Esophagus muscularis mucosa (tissue), 4 donors: ENCODE measurements at regions of chr3 and their contacts with region 1.

Region 1: GRCh38 chr3:63911873-63912767 is at the start of gene SCAANT1:
- DNase-seq: peak; percentile 96
- H3K4me3 ChIP-seq: peak within 1 kb of the TSS; percentile 85 to 98 (median 95)
- H3K27ac ChIP-seq: peak within 1 kb of the TSS; percentile 99 to 100 (median 100)
- H3K4me1 ChIP-seq: peaks cover 24 to 42% (median 41%) of the 10 kb centered on the region in 4 donors
- H3K27me3 ChIP-seq: no peaks in the 10 kb centered on the region
- CTCF ChIP-seq: peak in 2 of 3 experiments; percentile 10 to 18
- EP300 ChIP-seq: no peak
- POLR2A ChIP-seq: peak; percentile 56
- total RNA-seq, gene SCAANT1: not detected

Region 2: GRCh38 chr3:63863148-63864007 is 48.7 kb before region 1 on chr3 and contains the starts of genes ATXN7 and THOC7:
- intact Hi-C with region 1: loop called (anchors 5 kb)
- DNase-seq: no peak
- H3K4me3 ChIP-seq: peak within 1 kb of the TSS; percentile 81 to 100 (median 98)
- H3K27ac ChIP-seq: peak within 1 kb of the TSS; percentile 88 to 94 (median 90)
- H3K4me1 ChIP-seq: peaks cover 9 to 46% (median 33%) of the 10 kb centered on the region in 4 donors
- H3K27me3 ChIP-seq: no peaks in the 10 kb centered on the region
- CTCF ChIP-seq: no peak
- EP300 ChIP-seq: no peak
- POLR2A ChIP-seq: no peak
- total RNA-seq, gene ATXN7: 20.9 to 28.2 (median 22.6) TPM
- total RNA-seq, gene THOC7: 66.0 to 102 (median 78.8) TPM